Keratinocyte (primary cell): ENCODE measurements at regions of chr11 and their contacts with region 1.

Region 1: DNA sequence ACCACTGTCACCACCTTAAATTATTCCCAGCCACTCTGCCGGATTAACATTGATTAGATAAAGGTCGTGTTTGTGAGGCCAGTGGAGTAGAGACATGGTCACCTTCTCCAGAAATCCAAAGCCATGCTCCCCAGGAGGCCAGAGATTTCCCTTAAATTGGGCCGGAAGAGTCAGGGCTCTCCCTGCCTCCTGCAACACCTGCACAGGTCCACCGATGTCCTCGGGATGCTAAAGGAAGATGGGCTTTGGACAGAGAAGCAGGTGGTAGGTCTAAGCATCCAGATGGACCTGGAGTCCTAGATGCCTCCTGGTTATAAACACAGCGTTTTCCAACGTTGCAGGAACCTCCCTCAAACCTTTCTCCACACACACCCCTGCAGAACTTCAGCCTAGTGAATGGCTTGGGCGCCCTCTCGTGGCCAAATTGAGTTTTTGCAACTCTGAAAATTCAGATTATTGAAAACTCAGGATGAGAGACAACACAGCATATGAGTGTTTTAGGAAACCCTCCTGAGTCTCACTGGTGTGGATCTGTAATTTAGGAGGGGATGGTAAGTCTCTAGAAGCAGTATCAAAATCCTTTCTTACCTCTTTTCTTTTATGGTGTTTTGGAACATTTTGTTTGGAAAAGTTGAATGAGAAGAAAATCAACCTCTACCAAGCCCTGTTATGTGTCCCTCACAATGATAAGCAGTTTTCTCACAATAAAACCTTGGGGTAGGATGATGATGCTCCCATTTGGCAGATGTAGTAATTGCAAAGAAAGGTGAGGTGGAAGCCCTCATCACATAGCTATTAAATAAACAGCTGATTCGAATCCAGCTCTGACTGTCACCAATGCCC is 109.6 kb downstream of the RRAS2 start:
- DNase-seq: peak; percentile 9
- H3K4me3 ChIP-seq: no peak overlapping the region
- H3K27ac ChIP-seq: no peak overlapping the region
- H3K4me1 ChIP-seq: peaks cover 7% of the 10 kb centered on the region
- H3K27me3 ChIP-seq: peaks cover 31% of the 10 kb centered on the region
- CTCF ChIP-seq: peak; percentile 72 to 85 (median 74)

Region 2: GRCh38 chr11:13772223-13773046 is 476.9 kb before region 1 on chr11:
- dilution Hi-C with region 1: loop called (anchors 25 kb)
- DNase-seq: peak; percentile 36
- H3K4me3 ChIP-seq: no peak overlapping the region
- H3K27ac ChIP-seq: no peak overlapping the region
- H3K4me1 ChIP-seq: no peaks in the 10 kb centered on the region
- H3K27me3 ChIP-seq: peaks cover 7% of the 10 kb centered on the region
- CTCF ChIP-seq: peak; percentile 37 to 56 (median 39)

Region 3: GRCh38 chr11:13942983-13943382 is 306.4 kb before region 1 on chr11:
- dilution Hi-C with region 1: no loop called
- DNase-seq: no peak
- H3K4me3 ChIP-seq: peak overlapping the region in 2 of 3 experiments; percentile 21 to 27
- H3K27ac ChIP-seq: peak overlapping the region; percentile 63
- H3K4me1 ChIP-seq: peaks cover 38% of the 10 kb centered on the region
- H3K27me3 ChIP-seq: no peaks in the 10 kb centered on the region
- CTCF ChIP-seq: no peak

Region 4: DNA sequence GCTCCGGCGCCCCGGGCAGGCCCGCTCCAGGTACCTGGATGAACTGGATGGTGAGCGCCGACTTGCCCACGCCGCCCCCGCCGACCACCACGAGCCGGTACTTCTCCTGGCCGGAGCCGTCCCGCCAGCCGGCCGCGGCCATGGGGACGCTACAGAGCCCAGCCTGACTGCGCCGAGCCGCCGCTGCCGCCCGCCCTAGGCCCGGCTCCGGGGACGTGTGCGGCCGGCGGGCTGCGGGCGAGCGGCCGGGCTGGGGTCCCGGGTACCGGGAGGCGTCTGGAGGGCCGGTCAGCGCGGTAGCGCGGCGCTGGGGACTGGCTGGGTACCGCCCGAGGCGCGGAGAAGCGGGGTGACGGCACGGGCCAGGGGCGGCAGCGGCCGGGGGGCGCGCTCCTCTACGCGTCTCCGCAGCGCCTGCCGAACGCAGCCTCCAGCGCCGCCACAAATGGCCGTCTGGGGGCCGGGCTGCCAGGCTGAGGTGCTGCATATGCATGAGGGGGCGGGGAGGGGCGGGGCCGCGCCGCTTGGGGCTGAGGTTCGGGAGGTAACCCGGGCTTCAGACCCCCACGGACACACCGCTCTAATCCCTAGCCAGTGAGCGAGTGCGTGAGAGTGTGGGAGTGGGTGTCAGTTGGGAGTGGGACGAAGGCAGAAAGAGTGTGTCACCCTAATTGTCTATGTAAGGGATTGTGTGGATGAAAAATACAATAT is 109.5 kb after region 1 on chr11 and contains the start of gene RRAS2:
- dilution Hi-C with region 1: no loop called
- DNase-seq: no peak
- H3K4me3 ChIP-seq: peak within 1 kb of the TSS; percentile 84 to 92 (median 88)
- H3K27ac ChIP-seq: peak within 1 kb of the TSS; percentile 92
- H3K4me1 ChIP-seq: peaks cover 24% of the 10 kb centered on the region
- H3K27me3 ChIP-seq: no peaks in the 10 kb centered on the region
- CTCF ChIP-seq: no peak
- polyA plus RNA-seq, gene RRAS2: 52.2 to 99.3 TPM (median 54.4 TPM) in 3 replicates

Region 5: DNA sequence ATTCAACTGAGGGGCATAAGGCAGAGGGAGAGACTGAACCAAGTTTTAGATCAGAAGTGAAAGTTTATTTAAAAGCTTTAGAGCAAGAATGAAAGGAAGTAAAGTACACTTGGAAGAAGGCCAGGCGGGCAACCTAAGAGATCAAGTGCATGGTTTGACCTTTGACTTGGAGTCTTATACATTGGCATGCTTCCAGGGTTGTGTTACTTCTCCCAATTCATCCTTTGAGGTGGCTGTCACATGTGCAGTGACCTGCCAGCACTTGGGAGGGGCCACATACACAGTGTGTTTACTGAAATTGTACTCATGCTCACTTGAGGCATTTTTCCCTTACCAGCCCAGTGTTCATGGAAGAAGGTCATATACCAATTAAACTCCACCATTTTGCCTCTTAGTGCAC is 612.3 kb after region 1 on chr11:
- dilution Hi-C with region 1: no loop called
- DNase-seq: no peak
- H3K4me3 ChIP-seq: no peak overlapping the region
- H3K27ac ChIP-seq: no peak overlapping the region
- H3K4me1 ChIP-seq: no peaks in the 10 kb centered on the region
- H3K27me3 ChIP-seq: peaks cover 3% of the 10 kb centered on the region
- CTCF ChIP-seq: no peak